MCF 10A (cell line): ENCODE measurements at regions of chr5 and their contacts with region 1.

Region 1: DNA sequence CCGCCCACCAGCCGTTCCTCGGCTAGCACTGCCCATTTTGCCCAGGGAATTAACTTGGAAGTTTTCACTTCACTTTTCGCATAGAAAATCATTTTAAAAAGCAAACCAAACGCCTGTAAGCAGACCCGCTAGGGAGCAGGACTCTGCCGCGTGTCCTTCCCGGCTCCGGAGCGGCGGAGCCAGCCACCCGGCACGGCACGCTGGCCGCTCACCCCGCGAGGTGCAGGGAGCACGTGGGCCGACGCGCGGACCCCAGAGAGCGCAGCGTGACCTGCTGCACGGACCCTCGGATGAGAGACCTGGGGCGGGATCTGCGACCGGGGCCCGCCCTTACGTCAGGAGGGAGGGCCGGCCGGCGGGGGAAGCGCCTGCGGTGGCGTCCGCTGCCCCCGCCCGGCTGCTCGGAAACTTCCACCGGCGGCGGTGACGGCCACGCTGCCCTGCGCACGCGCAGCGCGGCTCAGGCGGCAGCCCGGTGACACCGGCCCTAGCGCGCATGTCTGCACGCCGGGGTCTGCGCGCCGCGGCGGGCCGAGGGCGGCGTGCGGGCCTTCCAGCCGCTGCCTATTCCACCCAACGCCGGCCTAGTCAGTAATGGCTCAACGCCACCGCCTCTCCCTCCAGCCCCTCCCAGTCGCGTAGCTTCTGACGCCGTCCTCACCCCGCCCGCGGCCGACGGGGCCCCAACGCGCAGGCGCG is 506 bp upstream of the TENT4A start:
- DNase-seq: peak; percentile 96
- H3K4me3 Mint-ChIP-seq: peak overlapping the region; percentile 75
- H3K27ac Mint-ChIP-seq: peak overlapping the region; percentile 83
- H3K4me1 Mint-ChIP-seq: peaks cover 24% of the 10 kb centered on the region
- H3K27me3 Mint-ChIP-seq: no peaks in the 10 kb centered on the region
- CTCF ChIP-seq: no peak

Region 2: GRCh38 chr5:6638236-6638635 is 74.5 kb before region 1 on chr5:
- CTCF ChIA-PET with region 1: interaction called, 8 read pairs
- POLR2A ChIA-PET with region 1: interaction called, 53 read pairs
- intact Hi-C with region 1: loop called (anchors 1 kb)
- DNase-seq: peak; percentile 79
- H3K4me3 Mint-ChIP-seq: peak overlapping the region; percentile 41
- H3K27ac Mint-ChIP-seq: peak overlapping the region; percentile 91
- H3K4me1 Mint-ChIP-seq: peaks cover 27% of the 10 kb centered on the region
- H3K27me3 Mint-ChIP-seq: no peaks in the 10 kb centered on the region
- CTCF ChIP-seq: no peak

Region 3: DNA sequence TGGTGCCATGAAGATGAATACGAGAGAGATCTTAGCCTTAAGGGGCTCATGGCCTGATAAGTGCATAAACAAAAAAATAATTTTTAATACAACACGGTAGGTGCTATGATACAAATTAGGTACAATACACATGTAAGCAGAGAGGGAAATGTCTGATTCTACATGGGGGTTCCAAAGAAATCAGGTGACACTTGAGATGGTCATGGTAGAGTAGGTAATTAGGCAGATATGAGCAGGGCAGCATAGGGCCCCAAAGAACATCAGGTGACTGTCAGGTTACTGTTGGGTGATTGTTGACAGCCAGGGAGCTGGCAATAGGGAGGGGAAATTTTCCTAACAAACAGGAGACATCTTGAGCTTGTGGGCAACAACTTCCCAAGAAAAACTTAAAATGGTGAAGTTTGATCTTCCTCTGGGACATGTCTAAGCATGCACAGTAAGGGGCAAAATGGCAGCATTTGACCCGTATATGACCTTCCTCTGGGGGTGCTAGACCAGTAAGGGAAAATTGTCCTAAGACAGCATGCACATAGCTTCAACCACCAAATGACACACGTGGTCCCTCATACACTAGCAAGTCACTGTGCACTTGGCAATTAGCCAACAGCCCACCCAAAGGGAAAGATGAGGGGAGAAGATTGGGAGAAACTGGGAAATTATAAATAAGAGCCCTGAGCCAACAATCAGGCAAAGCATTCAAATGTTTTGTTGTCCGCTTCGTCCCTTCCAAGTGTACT is 36.8 kb before region 1 on chr5:
- CTCF ChIA-PET with region 1: no interaction called
- POLR2A ChIA-PET with region 1: interaction called, 10 read pairs
- intact Hi-C with region 1: loop called (anchors 5 kb)
- DNase-seq: no peak
- H3K4me3 Mint-ChIP-seq: no peak overlapping the region
- H3K27ac Mint-ChIP-seq: no peak overlapping the region
- H3K4me1 Mint-ChIP-seq: peaks cover 14% of the 10 kb centered on the region
- H3K27me3 Mint-ChIP-seq: no peaks in the 10 kb centered on the region
- CTCF ChIP-seq: no peak